ENCODE measurements at regions of chr3 and their contacts with region 1.

Region 1: GRCh38 chr3:58305882-58306711 is at the starts of genes HTD2 and RPP14:
- DNase-seq: peak; percentile 97 to 99 (median 98)
- H3K4me3 ChIP-seq: peak within 1 kb of the TSS; percentile 99
- H3K4me3 Mint-ChIP-seq: peak within 1 kb of the TSS; percentile 90 to 100 (median 99)
- H3K27ac ChIP-seq: peak within 1 kb of the TSS; percentile 97
- H3K27ac Mint-ChIP-seq: peak within 1 kb of the TSS; percentile 99 to 100 (median 100)
- H3K4me1 ChIP-seq: peaks cover 25% of the 10 kb centered on the region
- H3K4me1 Mint-ChIP-seq: peaks cover 35 to 46% (median 39%) of the 10 kb centered on the region in 3 donors
- H3K27me3 ChIP-seq: peaks cover 3% of the 10 kb centered on the region
- H3K27me3 Mint-ChIP-seq: peaks cover 12 to 19% of the 10 kb centered on the region in 2 donors
- total RNA-seq, gene HTD2: 12.4 to 14.6 TPM
- total RNA-seq, gene RPP14: 22.7 to 24.5 TPM

Region 2: DNA sequence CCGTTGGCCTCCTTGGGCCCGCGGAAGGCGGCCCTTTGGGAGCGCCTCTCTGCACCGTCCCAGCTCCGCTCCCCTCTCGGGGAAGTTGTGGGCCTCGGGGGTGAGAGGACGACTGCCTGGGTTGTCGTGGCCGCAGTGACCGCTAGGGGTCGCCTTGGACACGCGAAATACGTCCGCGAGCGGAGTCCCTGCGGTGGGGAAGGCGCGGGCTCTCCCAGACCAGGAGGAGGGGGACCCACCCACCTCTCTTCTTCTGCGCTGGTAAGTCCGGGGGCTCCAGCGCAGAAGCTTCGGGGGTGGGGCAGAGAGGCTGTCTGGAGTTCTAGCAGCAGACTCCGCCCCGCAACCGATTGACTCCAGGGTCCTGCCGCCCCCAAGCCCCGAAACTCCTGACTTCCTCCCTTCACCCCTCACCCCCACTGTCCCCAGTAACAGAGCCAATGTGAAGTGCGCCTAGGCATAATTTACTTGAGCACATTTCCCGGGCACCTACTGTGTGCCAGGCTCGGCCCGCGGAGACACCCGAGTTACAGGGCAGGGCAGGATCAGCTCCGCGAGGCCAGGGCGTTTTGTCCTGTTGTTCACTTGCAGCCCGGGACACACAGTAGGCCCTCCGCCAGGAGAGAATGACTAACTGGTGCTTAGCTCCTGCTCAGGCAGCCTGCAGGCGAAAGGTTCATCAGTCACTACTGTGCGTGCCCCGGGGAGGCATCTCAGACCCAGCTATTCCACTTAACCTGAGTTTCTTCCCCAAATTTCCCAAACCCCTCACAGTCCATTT is 128.2 kb before region 1 on chr3:
- CTCF ChIA-PET with region 1: interaction called, 11 read pairs
- POLR2A ChIA-PET with region 1: no interaction called
- DNase-seq: peak; percentile 72 to 89 (median 84)
- H3K4me3 ChIP-seq: peak overlapping the region; percentile 55
- H3K4me3 Mint-ChIP-seq: peak overlapping the region; percentile 61 to 89 (median 71)
- H3K27ac ChIP-seq: no peak overlapping the region
- H3K27ac Mint-ChIP-seq: peak overlapping the region in 2 of 8 donors; percentile 33 to 48
- H3K4me1 ChIP-seq: peaks cover 10% of the 10 kb centered on the region
- H3K4me1 Mint-ChIP-seq: peaks cover 7 to 18% (median 10%) of the 10 kb centered on the region in 3 donors
- H3K27me3 ChIP-seq: no peaks in the 10 kb centered on the region
- H3K27me3 Mint-ChIP-seq: peaks cover 0 to 5% of the 10 kb centered on the region in 2 donors

Region 3: GRCh38 chr3:58332575-58333188 is 26.6 kb after region 1 on chr3 and contains the start of gene PXK:
- CTCF ChIA-PET with region 1: interaction called, 17 read pairs
- POLR2A ChIA-PET with region 1: interaction called, 3 read pairs
- DNase-seq: peak; percentile 68 to 82 (median 80)
- H3K4me3 ChIP-seq: peak within 1 kb of the TSS; percentile 77
- H3K4me3 Mint-ChIP-seq: peak within 1 kb of the TSS; percentile 95 to 100 (median 100)
- H3K27ac ChIP-seq: peak within 1 kb of the TSS; percentile 3
- H3K27ac Mint-ChIP-seq: peak within 1 kb of the TSS; percentile 55 to 97 (median 95)
- H3K4me1 ChIP-seq: peaks cover 16% of the 10 kb centered on the region
- H3K4me1 Mint-ChIP-seq: peaks cover 34 to 50% (median 45%) of the 10 kb centered on the region in 3 donors
- H3K27me3 ChIP-seq: no peaks in the 10 kb centered on the region
- H3K27me3 Mint-ChIP-seq: no peaks in the 10 kb centered on the region
- total RNA-seq, gene PXK: 24.8 to 27.2 TPM

Region 4: DNA sequence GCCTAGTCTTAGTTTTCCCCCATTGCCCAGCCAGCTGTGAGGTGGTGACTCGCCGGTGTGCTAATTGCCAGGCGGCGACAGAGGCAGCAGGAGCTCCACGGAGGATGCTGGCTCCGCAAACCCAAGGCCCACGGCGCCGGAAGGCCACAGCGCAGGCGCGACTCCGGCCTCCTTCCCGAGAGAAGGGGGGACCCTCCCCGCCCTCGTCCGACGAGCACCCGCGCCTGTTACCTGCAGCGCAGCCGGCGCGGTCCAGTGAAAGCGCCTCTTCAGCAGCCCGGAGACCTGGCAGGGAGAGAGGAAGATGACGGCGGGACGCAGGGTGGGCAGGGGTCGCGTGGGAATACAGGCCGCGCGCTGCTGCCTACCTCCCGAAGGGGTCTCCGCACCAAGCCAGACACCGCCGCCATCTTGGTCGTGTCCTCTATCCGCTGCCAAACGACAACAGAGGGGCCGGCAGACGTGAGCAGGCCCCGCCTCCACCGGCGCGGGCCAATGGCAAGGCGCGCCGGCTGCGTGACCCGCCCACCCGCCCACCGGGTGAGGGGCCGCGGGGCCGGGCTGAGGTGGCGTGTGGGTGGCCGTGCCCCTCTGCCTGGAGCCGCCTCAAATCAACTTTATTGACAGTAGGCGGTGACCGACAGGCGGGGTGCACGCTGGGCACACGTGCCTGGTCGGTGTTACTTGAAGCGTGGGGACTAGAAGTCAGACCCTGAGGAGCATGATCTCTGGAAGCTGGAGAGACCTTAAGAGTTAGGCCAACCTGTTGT is 127.5 kb after region 1 on chr3 and contains the start of gene PDHB:
- CTCF ChIA-PET with region 1: interaction called, 11 read pairs
- POLR2A ChIA-PET with region 1: interaction called, 12 read pairs
- DNase-seq: peak; percentile 83 to 92 (median 88)
- H3K4me3 ChIP-seq: peak within 1 kb of the TSS; percentile 80
- H3K4me3 Mint-ChIP-seq: peak within 1 kb of the TSS; percentile 91 to 98 (median 93)
- H3K27ac ChIP-seq: peak within 1 kb of the TSS; percentile 82
- H3K27ac Mint-ChIP-seq: peak within 1 kb of the TSS; percentile 92 to 98 (median 94)
- H3K4me1 ChIP-seq: peaks cover 20% of the 10 kb centered on the region
- H3K4me1 Mint-ChIP-seq: peaks cover 15 to 33% (median 26%) of the 10 kb centered on the region in 3 donors
- H3K27me3 ChIP-seq: no peaks in the 10 kb centered on the region
- H3K27me3 Mint-ChIP-seq: peaks cover 0 to 2% of the 10 kb centered on the region in 2 donors
- total RNA-seq, gene PDHB: 64.2 to 64.8 TPM

Region 5: DNA sequence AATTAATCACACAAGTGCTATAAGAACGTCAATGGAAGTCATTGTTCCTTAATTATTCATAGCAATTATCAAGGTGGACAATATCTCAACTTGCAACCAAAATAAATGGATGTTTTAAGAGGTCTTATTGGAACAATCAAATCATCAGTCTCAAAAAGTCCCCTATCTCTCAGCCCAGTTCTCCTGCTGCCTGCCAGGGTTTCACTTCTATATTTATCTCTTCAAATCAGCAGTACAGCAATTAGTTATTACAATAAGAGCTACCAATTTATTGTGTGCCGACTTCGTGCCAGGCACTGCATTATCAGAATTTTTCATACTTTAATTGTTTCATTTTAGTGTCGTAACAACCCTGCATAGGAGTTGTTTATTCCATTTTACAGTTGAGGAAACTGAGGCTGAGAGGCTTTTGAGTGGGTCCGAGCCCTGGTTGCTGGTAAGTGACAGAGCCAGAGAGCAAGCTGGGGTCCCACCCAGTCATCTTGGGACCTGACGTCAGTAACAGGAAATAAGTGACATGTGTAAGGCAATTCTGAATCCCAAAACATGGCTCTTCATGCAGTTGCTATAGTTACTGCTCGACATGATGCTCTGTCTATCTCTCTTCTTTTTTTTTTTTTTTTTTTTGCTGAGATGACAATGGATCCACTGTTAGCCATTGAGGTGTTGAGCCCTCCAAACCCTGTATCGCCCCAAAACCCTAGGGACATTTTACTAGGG is 177.0 kb after region 1 on chr3:
- CTCF ChIA-PET with region 1: interaction called, 11 read pairs
- POLR2A ChIA-PET with region 1: no interaction called
- DNase-seq: no peak
- H3K4me3 ChIP-seq: no peak overlapping the region
- H3K4me3 Mint-ChIP-seq: no peak overlapping the region
- H3K27ac ChIP-seq: no peak overlapping the region
- H3K27ac Mint-ChIP-seq: peak overlapping the region in 1 of 8 donors; percentile 17
- H3K4me1 ChIP-seq: no peaks in the 10 kb centered on the region
- H3K4me1 Mint-ChIP-seq: peaks cover 13 to 15% (median 14%) of the 10 kb centered on the region in 3 donors
- H3K27me3 ChIP-seq: no peaks in the 10 kb centered on the region
- H3K27me3 Mint-ChIP-seq: peaks cover 3 to 6% of the 10 kb centered on the region in 2 donors

Region 6: GRCh38 chr3:58532794-58533220 is 226.7 kb after region 1 on chr3:
- CTCF ChIA-PET with region 1: interaction called, 18 read pairs
- POLR2A ChIA-PET with region 1: no interaction called
- DNase-seq: peak; percentile 61 to 86 (median 70)
- H3K4me3 ChIP-seq: no peak overlapping the region
- H3K4me3 Mint-ChIP-seq: no peak overlapping the region
- H3K27ac ChIP-seq: no peak overlapping the region
- H3K27ac Mint-ChIP-seq: peak overlapping the region in 4 of 8 donors; percentile 31 to 90 (median 72)
- H3K4me1 ChIP-seq: peaks cover 7% of the 10 kb centered on the region
- H3K4me1 Mint-ChIP-seq: peaks cover 6 to 8% (median 8%) of the 10 kb centered on the region in 3 donors
- H3K27me3 ChIP-seq: no peaks in the 10 kb centered on the region
- H3K27me3 Mint-ChIP-seq: no peaks in the 10 kb centered on the region

Region 7: GRCh38 chr3:58868097-58868779 is 562.1 kb after region 1 on chr3:
- CTCF ChIA-PET with region 1: no interaction called
- POLR2A ChIA-PET with region 1: no interaction called
- DNase-seq: no peak
- H3K4me3 ChIP-seq: no peak overlapping the region
- H3K4me3 Mint-ChIP-seq: no peak overlapping the region
- H3K27ac ChIP-seq: no peak overlapping the region
- H3K27ac Mint-ChIP-seq: no peak overlapping the region
- H3K4me1 ChIP-seq: no peaks in the 10 kb centered on the region
- H3K4me1 Mint-ChIP-seq: no peaks in the 10 kb centered on the region
- H3K27me3 ChIP-seq: peaks cover 3% of the 10 kb centered on the region
- H3K27me3 Mint-ChIP-seq: peaks cover 0 to 5% of the 10 kb centered on the region in 2 donors